Activated B cell treated with CpG ODN at 0.5 μM for 24 hours (primary cell): ENCODE measurements at regions of chr13 and their contacts with region 1.

Region 1: DNA sequence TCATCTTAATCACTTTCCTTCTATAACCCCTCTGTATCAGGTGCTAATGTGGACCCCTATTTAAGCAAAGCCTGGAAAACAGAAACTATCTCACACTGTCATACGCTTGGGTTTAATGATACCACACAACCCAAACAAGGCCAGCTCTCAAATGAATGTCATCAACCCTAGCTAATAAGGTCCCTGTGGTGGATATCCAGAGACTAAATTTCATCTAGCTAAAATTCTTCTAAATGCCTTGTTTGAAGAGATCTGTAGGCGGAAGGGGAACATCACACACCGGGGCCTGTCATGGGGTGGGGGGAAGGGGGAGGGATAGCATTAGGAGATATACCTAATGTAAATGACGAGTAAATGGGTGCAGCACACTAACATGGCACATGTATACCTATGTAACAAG is 95.5 kb downstream of the FOXO1 start:
- DNase-seq: no peak
- ATAC-seq: peak; percentile 15
- H3K4me3 Mint-ChIP-seq: no peak overlapping the region
- H3K27ac Mint-ChIP-seq: peak overlapping the region; percentile 73
- H3K4me1 Mint-ChIP-seq: peaks cover 90% of the 10 kb centered on the region
- H3K27me3 Mint-ChIP-seq: no peaks in the 10 kb centered on the region
- CTCF ChIP-seq: no peak

Region 2: DNA sequence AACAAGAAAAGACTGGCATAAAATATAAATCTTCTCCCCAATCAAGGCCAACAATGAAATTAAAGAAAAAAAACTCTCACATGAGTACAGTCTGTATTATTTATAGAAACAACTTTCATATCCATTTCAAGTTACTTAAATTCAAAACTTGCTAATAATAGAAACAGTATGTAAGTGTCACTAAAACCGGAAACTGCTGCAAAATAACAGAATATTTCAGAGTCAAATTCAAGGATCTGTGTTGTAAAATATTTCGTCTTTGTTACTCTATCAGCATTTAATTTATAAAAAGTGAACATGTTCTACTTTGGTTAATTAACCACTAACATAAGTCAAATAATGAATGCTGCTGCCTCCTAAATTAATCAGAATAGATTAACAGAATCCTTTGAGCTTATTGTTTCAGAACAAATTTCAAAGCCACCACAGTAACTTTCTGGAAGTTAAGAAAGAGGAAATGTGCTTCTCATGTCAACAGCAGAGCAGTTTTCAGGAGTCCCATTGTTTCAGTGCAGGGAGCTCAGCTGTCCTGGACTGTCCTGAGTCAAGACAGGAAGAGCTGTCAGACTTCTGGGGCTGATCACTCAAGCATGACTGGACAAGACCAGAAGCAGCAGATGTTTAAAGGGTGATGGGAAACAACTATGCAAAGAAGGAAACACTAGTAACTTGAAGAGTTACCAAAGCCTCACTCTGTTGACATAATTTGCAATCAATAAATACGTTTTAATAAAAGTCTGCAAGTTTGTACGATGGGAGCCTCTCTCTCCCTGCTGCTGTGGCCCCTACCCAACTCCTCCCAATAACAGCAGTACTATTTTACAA is 18.6 kb after region 1 on chr13:
- CTCF ChIA-PET with region 1: interaction called, 3 read pairs
- POLR2A ChIA-PET with region 1: interaction called, 3 read pairs
- intact Hi-C with region 1: loop called (anchors 2 kb)
- DNase-seq: no peak
- ATAC-seq: peak; percentile 89
- H3K4me3 Mint-ChIP-seq: peak overlapping the region; percentile 81
- H3K27ac Mint-ChIP-seq: peak overlapping the region; percentile 96
- H3K4me1 Mint-ChIP-seq: peaks cover 99% of the 10 kb centered on the region
- H3K27me3 Mint-ChIP-seq: no peaks in the 10 kb centered on the region
- CTCF ChIP-seq: no peak

Region 3: DNA sequence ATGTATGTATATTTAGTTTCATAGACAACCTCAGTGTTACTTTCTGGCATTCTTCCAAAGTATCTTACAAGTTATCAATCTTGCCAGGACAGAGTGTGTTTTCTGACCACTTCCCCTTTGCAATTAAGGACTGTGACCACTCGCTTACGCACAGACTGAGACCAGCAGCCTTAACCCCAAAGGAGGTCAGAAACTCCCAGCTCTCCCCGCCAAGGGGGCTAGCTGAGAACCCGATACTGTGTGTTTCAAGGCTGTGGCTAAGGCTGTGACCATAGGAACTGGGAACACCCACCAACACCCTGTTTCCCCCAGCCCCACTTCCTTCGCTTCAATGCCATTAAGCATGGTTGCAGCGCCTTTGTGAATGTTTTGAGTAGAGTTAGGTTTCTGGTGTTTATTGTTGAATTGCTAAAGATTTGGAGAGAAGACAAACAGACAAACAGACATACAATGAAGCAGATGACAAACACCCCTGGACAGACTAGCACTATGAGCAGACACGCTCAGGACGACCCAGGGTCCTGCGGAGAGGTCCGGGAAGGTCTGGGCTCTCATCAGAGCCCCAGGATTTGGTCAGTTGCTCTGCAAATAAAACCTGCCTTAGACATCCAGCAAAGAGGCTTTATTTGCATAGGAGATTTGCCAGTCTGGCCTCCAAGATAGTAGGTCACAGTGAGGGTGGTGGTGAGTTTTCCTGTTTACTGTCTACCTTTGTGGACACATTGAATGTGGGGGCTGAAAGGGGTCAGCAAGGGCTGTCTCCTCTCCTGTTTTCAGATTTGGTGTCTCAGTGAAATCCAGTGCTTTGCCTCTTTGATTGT is 1978.0 kb after region 1 on chr13:
- CTCF ChIA-PET with region 1: no interaction called
- POLR2A ChIA-PET with region 1: no interaction called
- intact Hi-C with region 1: no loop called
- DNase-seq: peak; percentile 22
- ATAC-seq: peak; percentile 85
- H3K4me3 Mint-ChIP-seq: peak overlapping the region; percentile 26
- H3K27ac Mint-ChIP-seq: peak overlapping the region; percentile 27
- H3K4me1 Mint-ChIP-seq: peaks cover 16% of the 10 kb centered on the region
- H3K27me3 Mint-ChIP-seq: no peaks in the 10 kb centered on the region
- CTCF ChIP-seq: no peak